ENCODE measurements at regions of chr16 and their contacts with region 1.

Region 1: DNA sequence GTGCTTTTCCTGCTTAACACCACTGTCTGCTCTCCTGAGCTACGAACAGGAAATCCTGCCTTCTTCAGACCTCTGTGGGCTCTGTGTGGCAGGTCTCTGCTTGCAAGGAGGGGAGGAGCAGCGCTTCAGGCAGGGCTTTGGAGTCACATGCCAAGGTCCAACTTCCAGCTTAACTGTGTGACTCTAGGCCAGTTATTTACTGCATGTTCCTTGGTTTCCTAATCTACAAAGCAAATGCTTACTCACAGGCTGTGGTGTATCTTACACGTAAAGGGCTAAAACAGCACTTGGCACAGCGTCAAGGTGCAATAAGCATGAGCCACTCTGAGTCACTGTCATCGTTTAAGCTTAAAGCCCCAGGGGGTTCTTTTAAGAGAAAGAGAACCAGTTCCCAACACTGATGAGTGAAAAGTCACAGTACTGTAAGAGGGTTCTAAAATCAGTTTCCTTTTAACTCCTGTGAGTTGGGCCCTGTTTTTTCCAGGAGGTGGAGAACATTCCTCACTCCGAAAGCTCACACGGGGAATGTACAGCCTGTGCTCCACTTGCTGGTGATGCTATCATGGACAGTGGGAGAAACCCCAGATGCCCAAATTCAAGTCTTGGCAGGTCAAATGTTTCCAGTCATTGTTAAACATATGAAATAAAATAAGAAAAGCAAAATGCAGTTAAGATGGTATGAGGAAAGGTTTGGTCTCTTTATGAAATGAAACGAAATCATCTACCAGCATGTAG is 54.1 kb upstream of the BCAR1 start:
- DNase-seq: peak; percentile 72
- H3K4me3 Mint-ChIP-seq: no peak overlapping the region
- H3K27ac Mint-ChIP-seq: peak overlapping the region; percentile 68
- H3K4me1 Mint-ChIP-seq: peaks cover 18% of the 10 kb centered on the region
- H3K27me3 Mint-ChIP-seq: no peaks in the 10 kb centered on the region

Region 2: GRCh38 chr16:75319513-75320411 is 14.2 kb after region 1 on chr16:
- CTCF ChIA-PET with region 1: no interaction called
- POLR2A ChIA-PET with region 1: interaction called, 4 read pairs
- intact Hi-C with region 1: loop called (anchors 1 kb)
- DNase-seq: no peak
- H3K4me3 Mint-ChIP-seq: no peak overlapping the region
- H3K27ac Mint-ChIP-seq: no peak overlapping the region
- H3K4me1 Mint-ChIP-seq: peaks cover 27% of the 10 kb centered on the region
- H3K27me3 Mint-ChIP-seq: peaks cover 2% of the 10 kb centered on the region

Region 3: DNA sequence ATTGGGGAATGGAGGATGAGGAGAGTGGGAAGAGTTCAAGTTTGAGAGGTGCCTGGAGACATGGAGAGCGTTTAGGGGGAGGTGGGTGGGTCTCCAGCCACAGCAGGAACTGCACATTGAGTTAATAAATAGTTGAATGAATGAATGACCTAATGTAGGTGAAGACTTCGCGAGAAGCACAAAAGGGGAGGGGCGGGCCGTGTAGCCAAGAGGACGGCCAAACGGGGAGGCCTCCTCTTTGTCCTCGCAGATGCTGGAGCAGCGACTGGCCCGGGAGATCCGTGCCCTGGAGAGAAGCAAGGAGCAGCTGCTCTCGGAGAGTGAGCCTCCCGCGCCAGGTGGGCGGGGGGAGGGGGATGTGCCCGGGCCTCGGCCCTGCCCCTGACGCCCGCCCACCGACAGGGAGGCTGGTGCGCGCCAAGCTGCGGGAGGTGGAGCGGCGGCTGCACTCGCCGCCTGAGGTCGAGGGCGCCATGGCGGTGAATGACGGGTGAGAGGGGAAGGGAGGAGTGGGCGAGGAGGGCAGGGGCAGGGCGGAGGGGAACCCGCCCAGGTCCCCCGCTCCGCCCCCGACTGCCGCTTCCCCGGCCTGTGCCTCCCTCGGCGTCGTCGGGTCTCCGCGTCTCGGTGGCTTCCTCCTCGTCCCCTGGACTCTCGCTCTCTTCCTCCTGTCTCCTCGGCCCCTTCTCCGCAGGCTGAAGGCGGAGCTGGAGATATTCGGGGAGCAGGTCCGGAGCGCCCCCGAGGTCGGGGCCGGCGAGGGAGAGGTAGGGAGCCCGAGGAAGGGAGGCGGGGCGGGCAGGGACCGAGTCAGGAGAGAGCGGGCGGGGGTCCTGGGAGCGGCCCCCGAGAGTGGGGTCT is 1906.6 kb after region 1 on chr16:
- CTCF ChIA-PET with region 1: no interaction called
- POLR2A ChIA-PET with region 1: no interaction called
- intact Hi-C with region 1: loop called (anchors 10 kb)
- DNase-seq: peak; percentile 84
- H3K4me3 Mint-ChIP-seq: peak overlapping the region; percentile 74
- H3K27ac Mint-ChIP-seq: peak overlapping the region; percentile 34
- H3K4me1 Mint-ChIP-seq: peaks cover 12% of the 10 kb centered on the region
- H3K27me3 Mint-ChIP-seq: no peaks in the 10 kb centered on the region